ENCODE measurements at regions of chr22 and their contacts with region 1.

Region 1: GRCh38 chr22:44337678-44338004 is 24.9 kb upstream of the SHISAL1 start:
- DNase-seq: peak; percentile 52
- H3K4me3 ChIP-seq: no peak overlapping the region
- H3K27ac ChIP-seq: no peak overlapping the region
- H3K4me1 ChIP-seq: peaks cover 14% of the 10 kb centered on the region
- H3K27me3 ChIP-seq: no peaks in the 10 kb centered on the region
- CTCF ChIP-seq: no peak

Region 2: GRCh38 chr22:44260216-44261035 is 77.2 kb before region 1 on chr22:
- CTCF ChIA-PET with region 1: no interaction called
- dilution Hi-C with region 1: no loop called
- in situ Hi-C with region 1: no loop called
- intact Hi-C with region 1: no loop called
- DNase-seq: no peak
- H3K4me3 ChIP-seq: no peak overlapping the region
- H3K27ac ChIP-seq: no peak overlapping the region
- H3K4me1 ChIP-seq: no peaks in the 10 kb centered on the region
- H3K27me3 ChIP-seq: no peaks in the 10 kb centered on the region
- CTCF ChIP-seq: no peak

Region 3: DNA sequence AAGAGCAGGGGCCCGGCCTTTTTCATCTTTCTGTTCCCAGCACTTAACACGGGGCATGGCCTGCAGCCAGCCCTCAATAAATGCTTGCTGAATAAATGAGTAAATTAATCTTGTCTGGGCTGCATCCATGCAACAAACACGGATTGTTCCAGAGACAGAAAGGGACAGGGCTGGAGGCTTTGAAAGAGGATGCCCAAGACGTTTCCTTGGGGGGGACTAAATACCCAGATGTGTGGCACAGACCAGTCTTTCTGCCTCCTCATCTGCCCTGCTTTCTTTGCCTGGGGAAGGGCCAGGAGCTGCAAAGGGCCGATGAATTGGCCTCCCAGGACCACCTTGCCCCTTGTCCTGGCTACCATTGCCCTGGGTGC is 65.3 kb before region 1 on chr22:
- CTCF ChIA-PET with region 1: no interaction called
- dilution Hi-C with region 1: no loop called
- in situ Hi-C with region 1: no loop called
- intact Hi-C with region 1: no loop called
- DNase-seq: no peak
- H3K4me3 ChIP-seq: no peak overlapping the region
- H3K27ac ChIP-seq: no peak overlapping the region
- H3K4me1 ChIP-seq: no peaks in the 10 kb centered on the region
- H3K27me3 ChIP-seq: no peaks in the 10 kb centered on the region
- CTCF ChIP-seq: no peak

Region 4: DNA sequence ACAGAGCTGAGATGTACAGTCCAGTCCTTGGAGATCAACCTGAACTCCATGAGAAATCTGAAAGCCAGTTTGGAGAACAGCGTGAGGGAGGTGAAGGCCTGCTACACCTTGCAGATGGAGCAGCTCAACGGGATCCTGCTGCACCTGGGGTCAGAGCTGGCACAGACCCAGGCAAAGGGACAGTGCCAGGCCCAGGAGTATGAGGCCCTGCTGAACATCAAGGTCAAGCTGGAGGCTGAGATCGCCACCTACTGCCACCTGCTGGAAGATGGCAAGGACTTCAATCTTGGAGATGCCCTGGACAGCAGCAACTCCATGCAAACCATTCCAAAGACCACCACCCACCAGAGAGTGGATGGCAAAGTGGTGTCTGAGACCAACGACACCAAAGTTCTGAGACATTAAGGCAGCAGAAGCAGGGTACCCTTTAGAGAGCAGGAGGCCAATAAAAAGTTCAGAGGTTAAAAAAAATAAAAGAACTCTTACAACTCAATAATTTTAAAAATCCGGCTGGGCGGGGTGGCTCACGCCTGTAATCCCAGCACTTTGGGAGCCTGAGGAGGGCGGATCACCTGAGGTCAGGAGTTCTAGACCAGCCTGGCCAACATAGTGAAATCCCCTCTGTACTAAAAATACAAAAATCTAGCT is 230.3 kb after region 1 on chr22:
- CTCF ChIA-PET with region 1: no interaction called
- dilution Hi-C with region 1: no loop called
- in situ Hi-C with region 1: no loop called
- intact Hi-C with region 1: loop called (anchors 2 kb)
- DNase-seq: peak; percentile 17
- H3K4me3 ChIP-seq: no peak overlapping the region
- H3K27ac ChIP-seq: no peak overlapping the region
- H3K4me1 ChIP-seq: peaks cover 8% of the 10 kb centered on the region
- H3K27me3 ChIP-seq: no peaks in the 10 kb centered on the region
- CTCF ChIP-seq: peak; percentile 48 to 66